ENCODE measurements at regions of chr2 and their contacts with region 1.

Region 1: DNA sequence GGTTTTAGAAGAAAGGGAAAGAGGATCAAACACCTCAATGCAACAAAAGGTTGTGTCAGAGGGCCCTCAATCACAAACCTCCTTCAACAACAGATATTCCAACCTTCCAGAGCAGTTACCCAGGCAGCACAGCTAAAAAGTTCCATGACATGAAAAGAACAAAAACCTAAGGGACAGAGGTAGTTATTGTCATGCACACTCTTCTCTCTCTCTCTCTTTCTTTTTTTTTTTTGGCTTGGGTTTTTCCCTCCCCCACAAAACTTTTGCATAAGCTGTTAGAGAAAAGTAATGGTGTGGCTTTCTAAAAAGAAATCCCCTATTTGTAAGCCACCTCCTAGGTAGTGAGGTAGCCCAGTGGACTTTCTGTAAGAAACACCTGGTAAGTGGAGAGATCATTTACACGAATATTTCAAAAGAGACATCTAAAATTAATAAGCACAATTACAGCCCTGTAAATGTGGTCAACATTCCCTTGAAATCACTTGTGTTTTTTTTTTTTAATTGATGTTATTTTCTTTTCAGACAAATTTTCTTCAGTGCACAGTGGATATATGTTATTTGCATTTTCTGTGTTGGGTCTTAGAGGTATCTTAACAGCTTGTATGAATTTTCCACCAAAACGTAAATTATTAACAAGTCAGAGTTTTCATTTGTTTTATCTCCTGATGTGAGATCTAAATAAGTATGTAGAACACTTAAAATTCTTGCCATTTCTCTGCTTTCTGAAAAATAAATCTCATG is 48.4 kb downstream of the ZEB2 start:
- DNase-seq: no peak
- H3K4me3 Mint-ChIP-seq: peak overlapping the region; percentile 24
- H3K27ac Mint-ChIP-seq: peak overlapping the region; percentile 72
- H3K4me1 Mint-ChIP-seq: peaks cover 11% of the 10 kb centered on the region
- H3K27me3 Mint-ChIP-seq: peaks cover 1% of the 10 kb centered on the region

Region 2: DNA sequence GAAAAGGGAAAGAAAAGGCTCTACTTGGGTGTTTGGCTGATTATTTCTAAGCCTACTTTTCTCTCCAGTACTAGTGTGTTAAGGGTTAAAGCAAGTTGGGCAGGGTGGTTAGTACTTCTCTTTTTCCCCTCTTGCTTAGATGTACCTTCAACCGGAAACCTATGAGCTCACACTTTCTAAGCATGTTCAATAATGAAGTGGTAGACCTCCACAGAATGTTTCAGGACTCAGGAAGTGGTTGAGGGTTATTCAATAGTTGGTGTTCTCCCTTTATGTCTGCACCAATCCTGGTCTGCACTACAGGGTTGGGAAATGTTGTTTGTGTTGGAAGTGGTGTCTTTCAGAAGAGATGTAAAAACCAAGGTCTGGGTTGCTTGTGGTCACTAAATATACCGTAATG is 88.6 kb before region 1 on chr2:
- intact Hi-C with region 1: loop called (anchors 1 kb)
- DNase-seq: peak; percentile 74
- H3K4me3 Mint-ChIP-seq: no peak overlapping the region
- H3K27ac Mint-ChIP-seq: peak overlapping the region; percentile 78
- H3K4me1 Mint-ChIP-seq: peaks cover 21% of the 10 kb centered on the region
- H3K27me3 Mint-ChIP-seq: peaks cover 7% of the 10 kb centered on the region

Region 3: DNA sequence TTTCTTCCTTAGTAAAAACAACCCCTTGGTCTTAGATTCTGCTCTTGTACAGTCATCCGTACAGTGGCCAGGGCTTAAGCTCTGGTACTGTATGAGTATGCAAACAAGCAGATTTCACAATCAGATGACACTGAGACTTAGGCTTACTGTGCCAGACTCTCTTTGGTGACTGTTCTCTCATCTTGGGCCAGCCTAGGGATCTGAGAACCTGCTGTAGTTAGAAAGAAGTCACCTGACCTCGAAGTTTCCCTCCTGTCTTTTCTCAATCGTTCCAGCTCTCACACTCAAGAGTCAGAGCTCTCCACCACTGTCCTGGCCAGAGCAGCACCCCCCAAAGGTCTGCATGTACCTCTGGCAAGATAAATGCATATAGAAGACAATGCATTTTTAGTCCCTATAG is 14.8 kb before region 1 on chr2:
- intact Hi-C with region 1: loop called (anchors 2 kb)
- DNase-seq: no peak
- H3K4me3 Mint-ChIP-seq: no peak overlapping the region
- H3K27ac Mint-ChIP-seq: no peak overlapping the region
- H3K4me1 Mint-ChIP-seq: peaks cover 38% of the 10 kb centered on the region
- H3K27me3 Mint-ChIP-seq: peaks cover 7% of the 10 kb centered on the region